HEK293T (cell line): ENCODE measurements at regions of chr2 and their contacts with region 1.

Region 1: GRCh38 chr2:41869542-41870264 is 178.1 kb upstream of the PKDCC start:
- DNase-seq: peak; percentile 81

Region 2: DNA sequence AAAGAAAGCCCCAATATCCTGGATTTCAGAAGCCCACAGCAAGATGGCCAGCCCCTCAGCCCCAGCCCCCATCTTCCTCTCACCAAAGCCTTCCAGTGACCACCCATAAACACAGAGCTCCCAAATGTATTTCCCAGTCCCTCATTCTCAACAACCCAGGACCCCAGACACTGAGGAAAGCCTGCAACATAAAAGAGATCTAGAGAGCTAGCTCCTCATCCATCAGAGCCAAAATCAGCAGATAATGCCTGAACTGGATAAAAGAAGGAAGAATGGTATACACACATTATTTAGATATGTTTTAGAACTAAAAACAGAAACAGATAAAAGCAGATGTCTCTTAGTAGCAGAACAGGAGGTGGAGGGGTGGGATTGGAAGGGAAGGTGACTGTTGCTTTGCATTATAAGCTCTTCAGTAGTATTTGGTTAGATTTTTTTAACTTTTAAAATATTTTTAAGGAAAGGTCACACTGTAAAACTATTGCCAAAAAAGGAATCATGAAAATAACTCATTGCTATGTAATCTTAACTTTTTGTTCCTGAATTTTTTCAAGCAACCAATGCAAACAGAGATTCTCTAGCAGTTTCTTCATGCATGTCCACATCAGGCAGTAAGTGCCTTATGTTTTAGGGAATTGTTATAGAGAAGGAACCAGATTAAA is 33.9 kb after region 1 on chr2:
- CTCF ChIA-PET with region 1: no interaction called
- POLR2A ChIA-PET with region 1: no interaction called
- DNase-seq: no peak

Region 3: GRCh38 chr2:41917587-41917986 is 47.9 kb after region 1 on chr2:
- CTCF ChIA-PET with region 1: no interaction called
- POLR2A ChIA-PET with region 1: no interaction called
- DNase-seq: no peak

Region 4: GRCh38 chr2:42072349-42073118 is 202.8 kb after region 1 on chr2:
- CTCF ChIA-PET with region 1: interaction called, 10 read pairs
- POLR2A ChIA-PET with region 1: no interaction called
- DNase-seq: no peak

Region 5: GRCh38 chr2:42086500-42086953 is 216.8 kb after region 1 on chr2:
- CTCF ChIA-PET with region 1: interaction called, 143 read pairs
- POLR2A ChIA-PET with region 1: interaction called, 10 read pairs
- DNase-seq: peak; percentile 73